ENCODE measurements at regions of chr6 and their contacts with region 1.

Region 1: DNA sequence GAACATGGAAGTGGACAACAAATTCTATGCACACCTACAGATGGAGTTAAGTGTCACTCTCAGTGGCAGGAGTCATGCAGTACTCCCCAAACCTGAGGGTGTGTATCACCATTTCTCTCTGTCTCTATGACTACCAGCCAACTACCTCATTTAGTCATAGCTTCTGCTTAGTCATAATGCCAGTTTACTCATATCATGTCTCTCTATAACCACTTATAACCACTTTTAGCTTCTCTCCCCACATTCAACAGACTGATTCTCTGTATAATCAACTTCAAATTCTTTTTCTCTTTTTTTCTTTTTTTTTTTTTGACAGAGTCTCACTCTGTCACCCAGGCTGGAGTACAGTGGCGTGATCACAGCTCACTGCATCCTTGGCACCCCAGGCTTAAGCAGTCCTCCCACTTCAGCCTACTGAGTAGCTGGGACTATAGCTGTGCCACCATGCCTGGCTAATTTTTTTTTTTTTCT is 13.8 kb upstream of the GTF3C6 start:
- DNase-seq: peak; percentile 18 to 93
- H3K4me3 ChIP-seq: no peak overlapping the region
- H3K27ac ChIP-seq: peak overlapping the region; percentile 62
- H3K4me1 ChIP-seq: peaks cover 14% of the 10 kb centered on the region
- H3K27me3 ChIP-seq: no peaks in the 10 kb centered on the region
- CTCF ChIP-seq: no peak

Region 2: GRCh38 chr6:110728501-110728900 is 216.2 kb before region 1 on chr6:
- CTCF ChIA-PET with region 1: no interaction called
- POLR2A ChIA-PET with region 1: interaction called, 12 read pairs
- intact Hi-C with region 1: no loop called
- DNase-seq: no peak
- H3K4me3 ChIP-seq: no peak overlapping the region
- H3K27ac ChIP-seq: no peak overlapping the region
- H3K4me1 ChIP-seq: no peaks in the 10 kb centered on the region
- H3K27me3 ChIP-seq: no peaks in the 10 kb centered on the region
- CTCF ChIP-seq: no peak

Region 3: GRCh38 chr6:110873981-110874879 is 70.5 kb before region 1 on chr6 and contains the start of gene AMD1:
- CTCF ChIA-PET with region 1: no interaction called
- POLR2A ChIA-PET with region 1: interaction called, 10 read pairs
- intact Hi-C with region 1: loop called (anchors 2 kb)
- DNase-seq: peak; percentile 93 to 95
- H3K4me3 ChIP-seq: peak within 1 kb of the TSS; percentile 90
- H3K27ac ChIP-seq: peak within 1 kb of the TSS; percentile 73
- H3K4me1 ChIP-seq: peaks cover 36% of the 10 kb centered on the region
- H3K27me3 ChIP-seq: no peaks in the 10 kb centered on the region
- CTCF ChIP-seq: no peak
- total RNA-seq, gene AMD1: 40.1 and 46.4 TPM in 2 replicates

Region 4: DNA sequence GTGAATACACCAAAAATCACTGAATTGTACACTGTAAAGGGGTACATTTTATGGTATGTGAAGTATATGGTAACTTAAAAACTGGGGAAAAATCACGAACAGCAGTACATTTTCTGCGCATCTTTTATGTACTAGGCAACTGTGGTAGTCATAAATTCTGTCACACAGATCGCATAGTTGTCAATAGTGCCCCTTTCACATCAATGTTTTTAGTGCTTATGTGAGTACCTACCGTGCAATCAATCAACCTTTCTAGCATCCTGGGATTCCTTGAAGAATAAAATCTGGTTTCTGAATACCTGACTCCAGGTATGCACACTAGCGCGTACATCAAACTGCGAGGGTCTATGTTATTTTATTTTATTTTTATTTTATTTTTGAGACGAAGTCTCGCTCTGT is 36.5 kb after region 1 on chr6:
- CTCF ChIA-PET with region 1: no interaction called
- POLR2A ChIA-PET with region 1: interaction called, 10 read pairs
- intact Hi-C with region 1: no loop called
- DNase-seq: no peak
- H3K4me3 ChIP-seq: peak overlapping the region; percentile 87
- H3K27ac ChIP-seq: peak overlapping the region; percentile 95
- H3K4me1 ChIP-seq: peaks cover 9% of the 10 kb centered on the region; the same call in 1 of the 2 replicates
- H3K27me3 ChIP-seq: no peaks in the 10 kb centered on the region
- CTCF ChIP-seq: no peak

Region 5: DNA sequence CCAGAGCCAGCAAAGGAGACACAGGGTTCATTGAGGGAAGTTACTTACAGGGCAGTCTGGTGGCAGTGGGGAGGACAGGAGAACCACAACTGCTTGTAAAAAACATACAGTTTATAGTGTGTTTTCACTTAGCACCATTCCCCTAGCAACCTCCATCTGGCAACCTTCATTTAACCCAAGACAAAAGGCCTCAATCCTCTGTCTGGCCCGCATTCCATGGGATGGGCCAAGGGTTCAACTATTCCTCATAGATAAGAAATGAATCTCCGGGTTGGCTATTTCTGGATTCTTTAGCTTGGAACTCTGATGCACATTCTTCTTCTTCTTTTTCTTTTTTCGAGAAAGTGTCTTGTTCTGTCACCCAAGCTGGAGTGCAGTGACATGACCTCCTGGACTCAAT is 954.8 kb after region 1 on chr6:
- CTCF ChIA-PET with region 1: no interaction called
- POLR2A ChIA-PET with region 1: no interaction called
- intact Hi-C with region 1: no loop called
- DNase-seq: no peak
- H3K4me3 ChIP-seq: no peak overlapping the region
- H3K27ac ChIP-seq: no peak overlapping the region
- H3K4me1 ChIP-seq: no peaks in the 10 kb centered on the region
- H3K27me3 ChIP-seq: no peaks in the 10 kb centered on the region
- CTCF ChIP-seq: no peak

Measured in PC-9 (cell line).